Ascending aorta (tissue), 2 donors: ENCODE measurements at regions of chr14 and their contacts with region 1.

Region 1: DNA sequence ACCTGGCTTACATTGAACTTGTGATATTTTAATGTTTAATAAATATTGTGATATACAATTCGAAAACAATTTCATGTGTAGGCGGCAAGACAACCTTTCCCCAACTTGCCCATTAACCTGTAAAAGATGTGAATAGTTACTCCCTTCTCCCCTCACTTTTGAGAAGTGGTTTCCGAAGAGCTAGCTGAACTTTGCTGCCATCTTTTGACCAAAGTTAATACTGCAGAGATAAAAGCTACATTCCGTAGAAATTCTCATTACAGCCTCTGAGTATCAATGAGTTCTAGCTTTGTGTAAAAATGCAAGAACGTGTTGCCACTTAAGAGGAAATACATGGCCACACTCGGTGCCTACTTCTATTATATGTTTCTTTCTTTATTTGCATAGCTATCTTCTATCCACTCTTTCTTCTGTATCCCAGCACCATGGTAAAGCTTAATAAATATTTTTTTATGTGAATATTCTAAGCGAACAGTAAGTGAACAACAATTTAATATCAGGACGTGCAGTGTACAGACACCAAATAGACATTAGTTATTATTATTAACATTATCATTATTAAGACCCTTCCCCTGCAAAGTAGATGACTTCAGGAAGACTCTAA is 105.1 kb upstream of the TMEM260 start:
- DNase-seq: no peak
- H3K4me3 ChIP-seq: no peak overlapping the region
- H3K27ac ChIP-seq: no peak overlapping the region
- H3K4me1 ChIP-seq: no peaks in the 10 kb centered on the region
- H3K27me3 ChIP-seq: no peaks in the 10 kb centered on the region
- CTCF ChIP-seq: peak; percentile 52 to 92 (median 75)

Region 2: DNA sequence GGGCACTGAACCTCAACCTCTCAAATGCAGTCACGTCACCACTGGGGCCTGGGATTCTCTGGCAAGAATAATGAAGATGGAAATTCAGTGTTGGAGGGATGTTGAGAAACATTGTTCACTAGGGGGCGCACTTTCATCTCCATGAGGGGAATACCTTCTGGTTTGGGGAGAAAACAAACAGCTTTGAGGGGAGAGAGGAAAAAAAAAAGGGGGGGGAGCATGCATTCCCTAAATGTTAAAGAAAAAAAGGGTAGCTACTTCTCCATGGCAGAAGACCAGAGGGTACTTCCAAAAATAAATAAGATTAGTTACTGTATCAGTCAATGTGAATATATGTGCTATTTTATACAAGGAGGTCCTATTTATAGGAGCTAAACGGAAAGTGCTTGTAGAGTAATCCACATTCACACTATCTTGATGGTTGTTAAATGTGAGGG is 1028.3 kb before region 1 on chr14:
- intact Hi-C with region 1: loop called (anchors 5 kb)
- DNase-seq: peak in 1 of 2 donors; percentile 71
- H3K4me3 ChIP-seq: no peak overlapping the region
- H3K27ac ChIP-seq: no peak overlapping the region
- H3K4me1 ChIP-seq: no peaks in the 10 kb centered on the region
- H3K27me3 ChIP-seq: no peaks in the 10 kb centered on the region
- CTCF ChIP-seq: peak in 2 of 3 experiments; percentile 42 to 60

Region 3: DNA sequence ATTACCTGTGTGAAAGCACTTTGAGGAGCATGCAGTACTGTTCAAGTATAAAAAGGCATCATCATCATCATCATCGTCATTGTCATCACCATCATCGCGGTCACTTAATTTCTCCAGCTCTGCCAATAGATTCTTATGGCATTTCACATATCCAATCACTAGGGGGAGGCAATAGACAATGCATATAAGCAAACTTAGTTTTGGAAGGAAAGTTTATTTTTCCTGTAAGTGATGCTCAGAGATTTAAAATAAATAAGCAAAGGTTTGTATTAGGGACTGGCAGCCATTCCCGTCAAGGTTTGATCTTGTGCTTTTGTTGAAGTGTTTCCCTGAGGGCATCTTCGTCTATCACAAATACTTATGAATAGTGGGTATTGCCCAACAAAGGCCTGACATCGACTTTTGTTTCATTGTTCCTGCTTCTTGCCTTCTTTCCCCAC is 767.1 kb before region 1 on chr14:
- intact Hi-C with region 1: loop called (anchors 1 kb)
- DNase-seq: no peak
- H3K4me3 ChIP-seq: no peak overlapping the region
- H3K27ac ChIP-seq: no peak overlapping the region
- H3K4me1 ChIP-seq: no peaks in the 10 kb centered on the region
- H3K27me3 ChIP-seq: no peaks in the 10 kb centered on the region
- CTCF ChIP-seq: peak; percentile 59 to 67 (median 64)

Region 4: DNA sequence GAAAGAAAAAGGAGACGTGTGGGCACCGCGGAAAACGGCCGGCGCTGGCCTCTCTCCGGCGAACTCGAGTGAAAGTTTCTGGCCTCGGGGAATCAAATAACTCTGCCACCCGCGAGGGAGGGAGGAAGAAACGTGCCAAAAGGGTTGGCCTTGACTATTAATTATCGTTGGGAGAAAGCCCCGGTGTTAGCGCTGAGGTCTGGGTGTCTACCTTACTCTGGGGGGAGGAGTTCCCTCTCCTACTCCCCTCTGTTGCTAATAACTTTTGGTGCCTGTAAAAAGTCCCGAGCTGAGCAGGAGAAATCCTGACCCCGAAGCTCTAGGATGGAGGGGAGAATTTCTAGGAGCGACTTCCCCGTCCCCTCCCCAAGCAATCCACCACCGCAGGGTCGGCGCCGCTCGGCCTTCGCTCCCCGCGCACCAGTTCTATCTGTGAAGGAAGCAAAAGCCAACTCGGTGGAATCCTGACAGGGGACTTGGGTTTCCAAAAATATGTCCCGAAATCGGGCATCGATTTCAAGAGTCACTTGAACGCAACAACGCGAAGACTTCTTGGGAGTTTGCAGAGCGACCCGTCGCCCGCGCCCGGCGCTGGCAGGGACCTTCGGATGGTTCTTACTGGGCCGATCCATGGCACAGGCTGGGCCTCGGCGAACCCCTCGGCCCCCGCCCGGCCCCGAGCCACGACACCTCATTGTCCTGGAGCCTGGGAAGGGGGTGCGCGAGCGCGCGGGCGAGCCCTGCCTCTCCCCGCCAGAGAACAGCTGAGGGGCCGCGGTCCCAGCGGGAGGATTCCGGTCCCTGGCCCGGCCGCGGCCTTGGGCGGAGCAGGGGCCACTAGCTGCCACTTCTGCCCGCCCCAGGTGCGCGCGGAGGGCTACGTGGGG is 334.1 kb after region 1 on chr14:
- intact Hi-C with region 1: no loop called
- DNase-seq: no peak
- H3K4me3 ChIP-seq: peak overlapping the region; percentile 28 to 32
- H3K27ac ChIP-seq: no peak overlapping the region
- H3K4me1 ChIP-seq: peaks cover 4 to 6% of the 10 kb centered on the region in 2 donors
- H3K27me3 ChIP-seq: peaks cover 38% of the 10 kb centered on the region
- CTCF ChIP-seq: no peak